ENCODE measurements at regions of chr2 and their contacts with region 1.

Region 1: DNA sequence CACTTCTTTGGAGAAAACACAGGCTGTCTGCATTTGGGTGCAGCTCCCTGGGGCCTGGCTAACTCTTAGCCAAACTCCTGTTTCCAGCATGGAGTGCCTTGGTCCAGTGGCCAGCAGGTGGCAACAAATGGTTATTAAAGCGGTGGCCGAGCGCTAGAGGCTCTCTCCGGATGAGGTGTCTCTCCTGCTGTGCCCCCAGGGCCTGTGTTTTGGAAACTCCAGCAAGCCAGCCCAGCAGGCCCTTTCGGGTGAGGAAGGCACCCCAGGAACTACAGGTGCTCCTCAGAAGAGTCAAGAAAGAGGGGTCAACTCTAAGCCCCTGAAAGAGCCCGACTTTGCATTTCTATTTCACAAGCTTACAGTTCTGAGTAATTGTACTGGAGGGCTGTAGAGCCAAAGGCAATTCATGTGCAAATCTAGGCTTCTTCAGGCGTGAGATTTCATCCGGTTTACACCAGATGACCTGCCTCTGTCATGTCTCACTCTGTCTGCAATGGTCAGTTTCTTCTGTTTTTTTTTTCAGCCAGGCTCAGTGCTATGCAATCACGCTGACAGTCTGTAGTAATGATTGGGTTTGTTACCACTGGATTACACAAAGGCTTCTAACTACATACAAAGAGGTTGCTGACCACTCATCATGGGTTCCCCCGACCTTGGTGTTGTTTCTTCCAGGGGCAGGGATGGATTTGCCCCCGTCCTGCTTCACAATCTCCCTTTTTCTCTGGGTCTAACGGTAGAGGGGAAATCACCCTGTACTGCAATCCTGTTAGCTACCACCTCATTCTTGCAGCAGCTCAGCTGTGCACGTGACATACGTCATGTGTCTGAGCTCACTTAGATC is 7.6 kb upstream of the CHRNA1 start:
- DNase-seq: no peak
- H3K4me3 ChIP-seq: no peak overlapping the region
- H3K4me3 Mint-ChIP-seq: peak overlapping the region in 1 of 8 donors; percentile 3
- H3K27ac ChIP-seq: no peak overlapping the region
- H3K27ac Mint-ChIP-seq: peak overlapping the region in 4 of 7 donors; percentile 4 to 82 (median 78)
- H3K4me1 ChIP-seq: peaks cover 13% of the 10 kb centered on the region
- H3K4me1 Mint-ChIP-seq: peaks cover 10 to 23% (median 13%) of the 10 kb centered on the region in 4 donors
- H3K27me3 ChIP-seq: no peaks in the 10 kb centered on the region
- H3K27me3 Mint-ChIP-seq: no peaks in the 10 kb centered on the region

Region 2: DNA sequence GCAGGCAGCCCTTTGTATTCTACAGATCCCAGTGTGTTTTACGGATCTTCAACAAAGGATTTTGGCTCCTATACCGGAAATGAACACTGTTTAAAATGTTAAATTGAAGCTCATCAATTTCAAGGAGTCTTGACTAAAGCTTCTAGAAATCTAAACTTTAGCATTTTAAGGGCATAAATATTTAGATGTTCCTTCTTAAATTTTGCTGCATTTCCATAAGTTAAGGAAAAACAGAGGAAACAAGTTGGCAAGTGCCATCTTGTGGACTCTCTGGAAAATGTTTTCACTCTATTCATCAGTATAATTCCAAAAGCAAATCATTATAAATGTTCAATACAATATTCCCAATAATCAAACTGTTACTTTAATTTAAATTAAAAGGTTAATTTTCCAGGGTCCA is 213.8 kb after region 1 on chr2:
- CTCF ChIA-PET with region 1: interaction called, 70 read pairs
- POLR2A ChIA-PET with region 1: interaction called, 3 read pairs
- intact Hi-C with region 1: loop called (anchors 1 kb)
- DNase-seq: no peak
- H3K4me3 ChIP-seq: no peak overlapping the region
- H3K4me3 Mint-ChIP-seq: no peak overlapping the region
- H3K27ac ChIP-seq: no peak overlapping the region
- H3K27ac Mint-ChIP-seq: no peak overlapping the region
- H3K4me1 ChIP-seq: no peaks in the 10 kb centered on the region
- H3K4me1 Mint-ChIP-seq: peaks cover 4 to 8% (median 6%) of the 10 kb centered on the region in 4 donors
- H3K27me3 ChIP-seq: peaks cover 3% of the 10 kb centered on the region
- H3K27me3 Mint-ChIP-seq: peaks cover 2 to 3% of the 10 kb centered on the region in 2 donors

Region 3: DNA sequence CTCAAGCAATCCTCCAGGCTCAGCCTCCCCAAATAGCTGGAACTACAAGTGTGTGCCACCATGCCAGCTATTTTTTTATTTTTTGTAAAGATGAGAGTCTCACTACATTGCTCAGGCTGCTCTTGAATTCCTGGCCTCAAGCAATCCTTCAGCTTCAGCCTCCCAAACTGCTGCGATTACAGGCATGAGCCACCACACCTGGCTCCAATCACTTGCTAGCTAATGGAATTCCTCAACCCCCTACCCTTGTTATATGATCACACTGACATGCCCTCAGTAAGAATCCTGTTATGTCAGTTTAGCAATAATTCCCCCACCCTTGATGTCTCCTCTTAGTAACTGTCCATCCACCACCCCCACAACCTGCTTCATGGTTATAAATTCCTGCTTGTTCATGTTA is 221.0 kb after region 1 on chr2:
- CTCF ChIA-PET with region 1: interaction called, 70 read pairs
- POLR2A ChIA-PET with region 1: interaction called, 3 read pairs
- intact Hi-C with region 1: loop called (anchors 1 kb)
- DNase-seq: no peak
- H3K4me3 ChIP-seq: no peak overlapping the region
- H3K4me3 Mint-ChIP-seq: no peak overlapping the region
- H3K27ac ChIP-seq: no peak overlapping the region
- H3K27ac Mint-ChIP-seq: no peak overlapping the region
- H3K4me1 ChIP-seq: no peaks in the 10 kb centered on the region
- H3K4me1 Mint-ChIP-seq: peaks cover 4 to 8% (median 6%) of the 10 kb centered on the region in 4 donors
- H3K27me3 ChIP-seq: no peaks in the 10 kb centered on the region
- H3K27me3 Mint-ChIP-seq: peaks cover 6 to 11% of the 10 kb centered on the region in 2 donors

Measured in CD4-positive, alpha-beta memory T cell (primary cell).